Dorsolateral prefrontal cortex (tissue), 120 donors: ENCODE measurements at regions of chr11 and their contacts with region 1.

Region 1: DNA sequence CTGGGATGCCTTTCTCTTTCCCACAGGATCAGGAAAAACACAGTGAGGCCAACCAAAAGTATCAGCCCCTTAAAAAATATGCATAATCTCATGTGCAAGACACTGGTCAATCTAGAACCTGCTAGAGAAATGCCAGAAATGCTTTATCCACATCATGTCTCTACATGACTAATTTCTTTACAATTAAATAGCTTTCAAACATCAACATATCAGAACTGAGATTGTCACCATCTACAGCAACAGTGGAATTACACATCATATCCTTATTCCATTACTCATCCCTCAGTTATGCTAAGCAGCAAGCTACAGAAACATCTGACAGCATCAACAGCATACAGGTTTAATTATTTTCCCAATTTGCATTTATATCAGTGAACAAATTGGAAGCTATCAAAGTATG is 78.8 kb downstream of the DDIAS start:
- DNase-seq: no peak
- H3K4me3 ChIP-seq: no peak overlapping the region
- H3K27ac ChIP-seq: peak overlapping the region in 26 of 59 donors; percentile 0 to 61 (median 23)
- H3K27me3 ChIP-seq: no peaks in the 10 kb centered on the region
- CTCF ChIP-seq: no peak

Region 2: DNA sequence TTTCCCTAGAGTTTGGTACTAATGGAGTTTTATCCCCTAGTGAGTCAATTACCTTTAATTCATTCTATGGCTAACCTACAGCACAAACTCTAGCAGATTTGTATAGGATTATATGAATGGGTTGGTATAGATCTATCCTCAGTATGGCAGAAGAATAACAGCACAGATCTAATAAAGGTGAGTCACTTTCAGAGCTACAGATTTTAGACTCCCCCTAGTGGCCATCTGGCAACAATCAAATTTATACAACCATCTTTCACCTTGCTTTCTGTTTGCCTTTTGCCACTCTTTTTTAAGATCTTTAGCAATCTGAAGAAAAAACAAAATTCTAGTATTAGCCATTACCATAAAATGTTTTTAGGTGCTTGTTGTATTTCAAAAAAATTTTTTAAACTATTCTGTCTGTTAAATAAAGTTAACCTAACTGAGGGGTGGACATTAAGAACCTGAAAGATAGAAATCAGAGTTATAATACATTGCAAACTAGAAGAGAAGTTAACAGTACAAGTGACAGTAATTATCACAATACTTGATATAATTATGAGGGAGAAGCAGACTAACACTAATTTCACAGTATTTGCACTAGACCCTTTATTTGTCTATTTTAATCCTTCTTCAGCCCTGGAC is 52.9 kb before region 1 on chr11:
- intact Hi-C with region 1: loop called in 1 of 2 experiments (anchors 10 kb)
- DNase-seq: peak in 1 of 10 donors; percentile 13
- H3K4me3 ChIP-seq: peak overlapping the region in 1 of 59 donors; percentile 1
- H3K27ac ChIP-seq: no peak overlapping the region
- H3K27me3 ChIP-seq: no peaks in the 10 kb centered on the region
- CTCF ChIP-seq: peak; percentile 69 to 98 (median 83)